ENCODE measurements at regions of chr20 and their contacts with region 1.

Region 1: GRCh38 chr20:23293689-23294088 is 56.9 kb upstream of the NXT1 start:
- DNase-seq: peak; percentile 19
- H3K4me3 ChIP-seq: no peak overlapping the region
- H3K27ac ChIP-seq: no peak overlapping the region
- H3K4me1 ChIP-seq: no peaks in the 10 kb centered on the region
- H3K27me3 ChIP-seq: peaks cover 0 to 4% of the 10 kb centered on the region in 2 experiments
- CTCF ChIP-seq: no peak
- POLR2A ChIP-seq: no peak

Region 2: DNA sequence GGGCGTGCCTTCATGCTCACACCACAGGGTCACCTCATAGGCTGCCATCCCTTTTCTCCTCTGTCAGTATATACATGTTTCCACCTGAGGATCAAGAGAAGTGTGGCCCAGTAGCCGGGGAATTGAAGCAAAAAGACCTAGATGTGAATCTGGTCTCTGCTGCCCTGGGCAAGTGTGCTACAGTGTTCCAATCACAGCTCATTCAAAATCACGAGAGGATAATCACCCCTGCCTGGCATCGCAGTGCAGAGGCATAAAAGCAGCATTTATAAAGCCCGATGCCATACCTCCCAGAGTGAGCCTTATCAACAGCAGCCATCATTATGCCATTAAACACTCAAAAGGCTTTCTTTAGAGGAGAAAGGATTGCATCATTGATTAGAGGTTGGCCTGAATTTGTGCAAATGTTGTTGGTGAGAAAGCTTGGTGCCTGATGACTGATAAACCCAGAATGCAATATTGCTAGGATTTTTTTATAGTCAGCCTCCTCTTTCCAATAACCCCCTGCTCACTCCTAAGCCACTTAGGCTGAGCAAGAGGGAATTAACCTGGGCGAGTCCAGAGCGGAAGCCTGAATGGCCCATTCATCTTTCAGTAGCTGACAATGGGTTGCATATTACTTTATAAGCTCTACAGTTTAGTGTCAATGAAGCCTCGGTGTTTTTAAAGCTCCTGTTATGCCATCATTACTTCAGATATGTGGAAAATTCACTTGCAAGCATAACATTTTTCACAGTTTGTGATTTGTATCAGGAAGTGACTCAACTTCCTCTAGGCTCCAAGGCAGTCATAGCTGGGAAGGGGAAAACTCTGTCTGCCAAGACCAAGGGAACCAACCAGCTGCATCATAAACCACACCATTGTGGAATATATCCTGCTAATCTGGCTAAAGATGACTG is 35.6 kb before region 1 on chr20:
- CTCF ChIA-PET with region 1: no interaction called
- POLR2A ChIA-PET with region 1: no interaction called
- dilution Hi-C with region 1: no loop called
- intact Hi-C with region 1: no loop called
- DNase-seq: peak; percentile 97
- H3K4me3 ChIP-seq: no peak overlapping the region
- H3K27ac ChIP-seq: peak overlapping the region; percentile 98
- H3K4me1 ChIP-seq: peaks cover 39% of the 10 kb centered on the region
- H3K27me3 ChIP-seq: no peaks in the 10 kb centered on the region
- CTCF ChIP-seq: no peak
- POLR2A ChIP-seq: peak; percentile 25

Region 3: DNA sequence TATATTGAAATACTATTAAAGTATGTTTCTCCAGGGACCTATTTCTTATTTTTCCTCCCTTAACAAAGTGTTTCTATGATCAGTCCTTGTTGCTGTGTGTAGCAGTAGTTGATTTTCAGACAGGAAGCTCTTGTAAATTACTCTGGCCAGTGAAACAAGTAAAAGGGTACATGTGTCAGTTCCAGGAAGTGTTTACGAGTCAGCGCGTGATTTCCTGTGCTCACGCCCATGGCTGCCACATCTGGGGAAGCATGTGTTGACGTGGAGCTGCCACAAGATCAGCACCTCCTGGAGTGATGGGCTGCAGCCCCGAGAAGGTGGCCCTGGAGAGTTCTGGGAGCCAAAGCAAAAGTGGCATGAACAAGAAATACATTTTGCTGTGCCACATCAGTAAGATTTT is 733.5 kb after region 1 on chr20:
- CTCF ChIA-PET with region 1: no interaction called
- POLR2A ChIA-PET with region 1: no interaction called
- dilution Hi-C with region 1: no loop called
- intact Hi-C with region 1: loop called (anchors 5 kb)
- DNase-seq: peak; percentile 90
- H3K4me3 ChIP-seq: no peak overlapping the region
- H3K27ac ChIP-seq: peak overlapping the region; percentile 85
- H3K4me1 ChIP-seq: peaks cover 14% of the 10 kb centered on the region
- H3K27me3 ChIP-seq: no peaks in the 10 kb centered on the region
- CTCF ChIP-seq: no peak
- POLR2A ChIP-seq: peak; percentile 48

Region 4: GRCh38 chr20:24746351-24746685 is 1452.6 kb after region 1 on chr20:
- CTCF ChIA-PET with region 1: no interaction called
- POLR2A ChIA-PET with region 1: no interaction called
- dilution Hi-C with region 1: no loop called
- intact Hi-C with region 1: no loop called
- DNase-seq: no peak
- H3K4me3 ChIP-seq: no peak overlapping the region
- H3K27ac ChIP-seq: no peak overlapping the region
- H3K4me1 ChIP-seq: no peaks in the 10 kb centered on the region
- H3K27me3 ChIP-seq: no peaks in the 10 kb centered on the region
- CTCF ChIP-seq: no peak
- POLR2A ChIP-seq: no peak